CD8-positive, alpha-beta T cell (primary cell): ENCODE measurements at regions of chr22 and their contacts with region 1.

Region 1: DNA sequence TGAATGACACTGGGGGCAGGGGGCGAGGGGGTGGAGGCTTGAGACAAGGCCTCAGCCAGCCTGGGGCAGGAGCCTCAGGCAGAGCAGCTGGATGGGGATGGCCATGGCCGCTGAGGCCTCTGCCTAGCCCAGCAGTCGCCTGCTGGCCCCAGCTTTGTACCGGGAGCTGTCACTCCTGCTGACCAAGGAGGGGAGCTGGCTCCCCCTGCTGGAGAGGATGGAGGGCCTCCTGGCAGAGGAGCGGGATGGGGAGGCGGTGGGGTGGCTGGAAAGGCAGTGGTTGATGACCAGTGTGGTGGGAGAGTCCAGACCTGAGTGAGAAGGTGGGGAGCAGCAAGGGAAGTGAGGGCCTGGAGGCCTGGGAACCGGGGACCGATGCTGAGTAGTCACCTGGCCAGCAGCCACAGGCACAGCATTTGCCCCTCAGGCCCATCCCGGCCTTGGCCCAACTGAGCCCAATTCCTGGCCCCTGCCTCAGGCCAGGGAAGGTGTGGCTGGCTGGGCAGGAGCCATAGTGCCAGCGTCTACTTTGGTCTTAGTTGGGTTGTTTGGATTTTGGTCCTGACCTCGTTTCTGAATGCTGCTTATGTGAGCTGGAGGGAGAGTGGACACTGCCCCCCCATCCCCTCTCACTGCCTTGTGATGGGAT is 6.0 kb upstream of the SUSD2 start:
- DNase-seq: peak; percentile 39 to 83 (median 69)
- ATAC-seq: peak; percentile 67
- H3K4me3 ChIP-seq: no peak overlapping the region
- H3K4me3 Mint-ChIP-seq: no peak overlapping the region
- H3K27ac ChIP-seq: peak overlapping the region; percentile 27 to 32
- H3K27ac Mint-ChIP-seq: peak overlapping the region; percentile 41
- H3K4me1 ChIP-seq: peaks cover 2% of the 10 kb centered on the region
- H3K4me1 Mint-ChIP-seq: peaks cover 9% of the 10 kb centered on the region
- H3K27me3 ChIP-seq: no peaks in the 10 kb centered on the region
- H3K27me3 Mint-ChIP-seq: no peaks in the 10 kb centered on the region
- CTCF ChIP-seq: peak; percentile 68

Region 2: GRCh38 chr22:24106385-24107381 is 68.6 kb before region 1 on chr22:
- CTCF ChIA-PET with region 1: interaction called, 20 read pairs
- POLR2A ChIA-PET with region 1: no interaction called
- intact Hi-C with region 1: loop called (anchors 1 to 2 kb)
- DNase-seq: peak; percentile 16 to 64 (median 45)
- ATAC-seq: peak; percentile 55
- H3K4me3 ChIP-seq: no peak overlapping the region
- H3K4me3 Mint-ChIP-seq: no peak overlapping the region
- H3K27ac ChIP-seq: no peak overlapping the region
- H3K27ac Mint-ChIP-seq: peak overlapping the region; percentile 52
- H3K4me1 ChIP-seq: no peaks in the 10 kb centered on the region
- H3K4me1 Mint-ChIP-seq: peaks cover 2% of the 10 kb centered on the region
- H3K27me3 ChIP-seq: no peaks in the 10 kb centered on the region
- H3K27me3 Mint-ChIP-seq: no peaks in the 10 kb centered on the region
- CTCF ChIP-seq: no peak

Region 3: DNA sequence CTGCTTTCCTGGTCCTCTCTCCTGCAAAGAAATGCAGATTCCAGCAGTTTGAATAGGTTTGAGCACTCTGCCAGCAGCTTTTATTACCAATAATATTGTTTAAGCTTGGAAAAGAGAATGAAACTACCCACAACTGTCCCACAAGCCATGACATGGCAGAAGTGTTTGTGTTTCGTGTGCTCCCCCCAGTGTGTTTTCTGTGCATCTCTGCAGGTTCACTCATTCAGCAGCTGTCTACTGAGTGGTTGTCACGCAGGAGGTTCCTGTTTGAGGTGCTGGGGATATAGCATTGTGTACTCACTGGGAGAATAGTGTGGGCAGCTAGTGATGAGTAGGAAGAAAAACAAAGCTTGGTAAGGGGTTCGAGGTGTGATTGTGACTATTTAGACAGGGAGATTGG is 49.3 kb before region 1 on chr22:
- CTCF ChIA-PET with region 1: interaction called, 242 read pairs
- POLR2A ChIA-PET with region 1: no interaction called
- intact Hi-C with region 1: loop called in 1 of 2 experiments (anchors 1 kb)
- DNase-seq: no peak
- ATAC-seq: no peak
- H3K4me3 ChIP-seq: no peak overlapping the region
- H3K4me3 Mint-ChIP-seq: no peak overlapping the region
- H3K27ac ChIP-seq: no peak overlapping the region
- H3K27ac Mint-ChIP-seq: no peak overlapping the region
- H3K4me1 ChIP-seq: no peaks in the 10 kb centered on the region
- H3K4me1 Mint-ChIP-seq: peaks cover 3% of the 10 kb centered on the region
- H3K27me3 ChIP-seq: no peaks in the 10 kb centered on the region
- H3K27me3 Mint-ChIP-seq: no peaks in the 10 kb centered on the region
- CTCF ChIP-seq: no peak